ENCODE measurements at regions of chr19 and their contacts with region 1.

Region 1: GRCh38 chr19:47391510-47392223 is 27.7 kb downstream of the MEIS3 start:
- DNase-seq: peak; percentile 90
- H3K4me3 Mint-ChIP-seq: no peak overlapping the region
- H3K27ac Mint-ChIP-seq: no peak overlapping the region
- H3K4me1 Mint-ChIP-seq: peaks cover 14% of the 10 kb centered on the region
- H3K27me3 Mint-ChIP-seq: peaks cover 19% of the 10 kb centered on the region

Region 2: DNA sequence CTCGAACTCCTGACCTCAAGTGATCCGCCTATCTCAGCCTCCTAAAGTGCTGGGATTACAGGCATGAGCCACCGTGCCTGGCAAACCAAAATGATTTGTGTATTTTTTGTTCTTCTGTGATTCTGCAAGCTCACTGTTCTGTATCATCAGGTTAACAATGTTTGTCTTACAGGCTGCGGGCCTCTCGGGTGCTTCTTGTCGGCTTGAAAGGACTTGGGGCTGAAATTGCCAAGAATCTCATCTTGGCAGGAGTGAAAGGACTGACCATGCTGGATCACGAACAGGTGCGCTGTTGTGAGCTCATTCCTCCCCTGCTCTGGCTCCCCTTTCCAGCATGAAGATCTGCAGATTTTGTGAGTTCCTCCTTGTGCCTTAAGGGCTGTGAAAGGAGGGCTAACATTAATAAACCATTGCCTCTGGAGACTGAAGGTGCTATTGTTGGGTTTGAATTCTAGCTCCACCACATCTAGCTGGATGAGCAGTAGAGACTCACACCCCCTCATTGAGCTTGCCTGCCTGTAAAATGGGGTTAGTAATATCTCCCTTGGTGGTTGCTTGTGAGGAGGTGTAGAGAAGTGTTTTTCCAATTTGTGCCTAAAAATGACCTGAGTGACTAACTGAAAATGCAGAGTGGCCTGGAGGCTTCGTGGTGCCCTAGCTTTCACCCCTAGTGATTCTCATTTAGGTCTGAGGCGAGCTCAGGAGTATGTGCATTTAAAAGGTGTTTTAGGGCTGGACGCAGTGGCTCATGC is 248.2 kb before region 1 on chr19:
- CTCF ChIA-PET with region 1: no interaction called
- DNase-seq: no peak
- H3K4me3 Mint-ChIP-seq: no peak overlapping the region
- H3K27ac Mint-ChIP-seq: peak overlapping the region; percentile 29
- H3K4me1 Mint-ChIP-seq: peaks cover 62% of the 10 kb centered on the region
- H3K27me3 Mint-ChIP-seq: no peaks in the 10 kb centered on the region

Region 3: DNA sequence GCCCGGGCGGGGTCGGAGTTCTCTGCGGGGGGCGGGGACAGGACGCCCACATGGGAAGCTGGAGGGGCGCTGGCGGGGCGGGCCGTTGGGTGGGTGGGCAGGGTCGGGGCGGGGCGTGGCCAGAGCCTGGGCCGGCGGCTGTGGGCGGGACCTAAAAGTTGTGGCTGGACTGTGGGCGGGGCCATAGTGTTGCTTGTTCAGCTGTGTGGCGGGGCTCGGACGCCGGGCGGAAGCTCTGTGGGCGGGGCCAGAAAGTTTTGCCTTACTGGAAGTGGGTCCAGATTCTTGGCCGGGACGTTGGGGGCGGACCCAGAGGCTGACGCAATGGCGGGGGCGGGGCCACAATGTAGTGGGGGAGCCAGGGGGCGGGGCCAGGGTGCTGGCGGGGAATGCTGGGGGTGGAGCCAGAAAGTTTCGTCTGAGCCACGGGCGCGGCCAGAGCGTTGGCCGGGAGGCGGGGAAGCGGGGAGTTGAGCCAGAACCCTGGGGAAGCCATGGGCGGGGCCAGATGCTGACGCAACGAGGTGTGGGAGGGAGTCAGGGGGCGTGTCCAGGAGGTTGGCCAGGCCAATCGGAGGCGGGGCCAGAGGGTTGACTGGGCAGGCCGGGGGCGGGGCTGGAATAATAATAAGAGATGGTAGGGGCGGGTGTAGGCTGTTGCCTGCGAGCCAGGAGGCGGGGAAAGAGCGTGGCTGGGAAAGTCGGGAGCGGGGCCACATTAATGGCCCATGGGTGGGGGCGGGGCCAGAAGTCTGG is 134.8 kb before region 1 on chr19:
- CTCF ChIA-PET with region 1: no interaction called
- DNase-seq: peak; percentile 100
- H3K4me3 Mint-ChIP-seq: peak overlapping the region; percentile 95
- H3K27ac Mint-ChIP-seq: peak overlapping the region; percentile 96
- H3K4me1 Mint-ChIP-seq: peaks cover 40% of the 10 kb centered on the region
- H3K27me3 Mint-ChIP-seq: peaks cover 7% of the 10 kb centered on the region

Region 4: GRCh38 chr19:47296036-47296435 is 95.6 kb before region 1 on chr19:
- CTCF ChIA-PET with region 1: interaction called, 37 read pairs
- DNase-seq: peak; percentile 84
- H3K4me3 Mint-ChIP-seq: no peak overlapping the region
- H3K27ac Mint-ChIP-seq: no peak overlapping the region
- H3K4me1 Mint-ChIP-seq: peaks cover 13% of the 10 kb centered on the region
- H3K27me3 Mint-ChIP-seq: no peaks in the 10 kb centered on the region

Region 5: GRCh38 chr19:47336853-47337279 is 54.8 kb before region 1 on chr19:
- CTCF ChIA-PET with region 1: no interaction called
- DNase-seq: peak; percentile 54
- H3K4me3 Mint-ChIP-seq: no peak overlapping the region
- H3K27ac Mint-ChIP-seq: peak overlapping the region; percentile 89
- H3K4me1 Mint-ChIP-seq: peaks cover 22% of the 10 kb centered on the region
- H3K27me3 Mint-ChIP-seq: peaks cover 27% of the 10 kb centered on the region

Region 6: GRCh38 chr19:47348819-47349795 is 42.6 kb before region 1 on chr19 and contains the start of gene DHX34:
- CTCF ChIA-PET with region 1: interaction called, 17 read pairs
- DNase-seq: peak; percentile 99
- H3K4me3 Mint-ChIP-seq: peak within 1 kb of the TSS; percentile 95
- H3K27ac Mint-ChIP-seq: peak within 1 kb of the TSS; percentile 76
- H3K4me1 Mint-ChIP-seq: peaks cover 35% of the 10 kb centered on the region
- H3K27me3 Mint-ChIP-seq: peaks cover 5% of the 10 kb centered on the region

Measured in activated naive CD4-positive, alpha-beta T cell treated with anti-CD3 and anti-CD28 coated beads, Interleukin-2, amount 10 ng/mL, durations not matched to agents 7 days and 5 days (primary cell).